ENCODE measurements at regions of chr3 and their contacts with region 1.

Region 1: GRCh38 chr3:65439641-65440284 is 599.0 kb downstream of the MAGI1 start:
- DNase-seq: peak; percentile 20 to 88 (median 68)

Region 2: GRCh38 chr3:65342084-65342683 is 97.6 kb before region 1 on chr3:
- intact Hi-C with region 1: no loop called
- DNase-seq: peak in 34 of 42 donors; percentile 1 to 74 (median 36)

Region 3: DNA sequence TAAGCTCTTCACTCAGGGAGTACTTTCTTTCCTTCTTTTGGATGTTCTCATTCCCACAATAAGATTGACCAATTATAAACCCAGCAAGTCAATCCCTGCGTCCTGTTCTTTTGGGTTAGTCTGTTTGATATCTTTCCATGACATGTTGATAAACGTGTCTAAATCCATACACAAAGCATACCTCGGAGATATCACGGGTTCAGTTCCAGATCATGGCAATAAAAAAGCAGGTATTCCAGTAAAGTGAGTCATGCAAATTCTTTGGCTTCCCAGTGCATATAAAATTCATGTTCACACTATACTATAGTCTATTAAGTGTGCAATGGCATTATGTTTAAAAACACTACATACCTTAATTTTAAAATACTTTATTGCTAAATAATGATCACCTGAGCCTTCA is 68.7 kb before region 1 on chr3:
- intact Hi-C with region 1: no loop called
- DNase-seq: no peak

Region 4: GRCh38 chr3:65732051-65732935 is 292.5 kb after region 1 on chr3:
- intact Hi-C with region 1: loop called (anchors 10 kb)
- DNase-seq: peak in 19 of 42 donors; percentile 10 to 80 (median 47)